ENCODE measurements at regions of chr5 and their contacts with region 1.

Region 1: GRCh38 chr5:118987988-118988865 is at the start of gene DTWD2:
- DNase-seq: peak; percentile 97
- ATAC-seq: peak; percentile 87
- H3K4me3 ChIP-seq: peak within 1 kb of the TSS; percentile 63 to 86 (median 76)
- H3K4me3 Mint-ChIP-seq: peak within 1 kb of the TSS; percentile 91
- H3K27ac ChIP-seq: peak within 1 kb of the TSS; percentile 66 to 73
- H3K27ac Mint-ChIP-seq: peak within 1 kb of the TSS; percentile 90
- H3K4me1 ChIP-seq: peaks cover 17% of the 10 kb centered on the region in 2 donors
- H3K4me1 Mint-ChIP-seq: peaks cover 32% of the 10 kb centered on the region
- H3K27me3 ChIP-seq: no peaks in the 10 kb centered on the region
- H3K27me3 Mint-ChIP-seq: no peaks in the 10 kb centered on the region
- CTCF ChIP-seq: peak; percentile 99
- total RNA-seq, gene DTWD2: 6.0 and 6.3 TPM in 2 replicates

Region 2: DNA sequence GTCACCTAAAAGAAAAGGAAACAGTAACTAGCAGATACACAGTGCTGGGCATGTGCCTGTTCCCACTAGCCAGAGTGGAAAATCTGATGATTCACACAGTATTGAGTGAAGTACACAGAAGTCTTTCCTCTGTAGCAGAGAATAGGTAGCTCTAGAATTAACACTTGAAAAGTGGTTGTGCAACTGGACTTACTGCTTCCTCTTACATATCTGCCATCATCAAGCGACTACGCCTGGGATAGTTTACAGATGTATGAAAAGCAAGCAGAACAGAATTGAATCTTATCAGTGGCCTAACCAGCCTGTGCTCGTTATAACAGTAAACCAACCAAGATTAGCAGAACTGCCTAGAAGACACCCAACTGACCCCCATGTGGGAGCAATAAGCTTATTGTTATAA is 130.5 kb before region 1 on chr5:
- CTCF ChIA-PET with region 1: no interaction called
- POLR2A ChIA-PET with region 1: no interaction called
- intact Hi-C with region 1: no loop called
- DNase-seq: no peak
- ATAC-seq: no peak
- H3K4me3 ChIP-seq: no peak overlapping the region
- H3K4me3 Mint-ChIP-seq: no peak overlapping the region
- H3K27ac ChIP-seq: no peak overlapping the region
- H3K27ac Mint-ChIP-seq: no peak overlapping the region
- H3K4me1 ChIP-seq: no peaks in the 10 kb centered on the region
- H3K4me1 Mint-ChIP-seq: no peaks in the 10 kb centered on the region
- H3K27me3 ChIP-seq: no peaks in the 10 kb centered on the region
- H3K27me3 Mint-ChIP-seq: no peaks in the 10 kb centered on the region
- CTCF ChIP-seq: no peak

Region 3: GRCh38 chr5:119070828-119071572 is 82.8 kb after region 1 on chr5 and contains the start of gene DMXL1:
- CTCF ChIA-PET with region 1: interaction called, 23 read pairs
- POLR2A ChIA-PET with region 1: interaction called, 15 read pairs
- intact Hi-C with region 1: loop called (anchors 1 kb)
- DNase-seq: peak; percentile 99
- ATAC-seq: peak; percentile 81
- H3K4me3 ChIP-seq: peak within 1 kb of the TSS; percentile 66 to 98 (median 91)
- H3K4me3 Mint-ChIP-seq: peak within 1 kb of the TSS; percentile 99
- H3K27ac ChIP-seq: peak within 1 kb of the TSS; percentile 94 to 97
- H3K27ac Mint-ChIP-seq: peak within 1 kb of the TSS; percentile 100
- H3K4me1 ChIP-seq: peaks cover 35 to 43% of the 10 kb centered on the region in 2 donors
- H3K4me1 Mint-ChIP-seq: peaks cover 40% of the 10 kb centered on the region
- H3K27me3 ChIP-seq: no peaks in the 10 kb centered on the region
- H3K27me3 Mint-ChIP-seq: no peaks in the 10 kb centered on the region
- CTCF ChIP-seq: no peak
- total RNA-seq, gene DMXL1: 129 and 135 TPM in 2 replicates

Region 4: DNA sequence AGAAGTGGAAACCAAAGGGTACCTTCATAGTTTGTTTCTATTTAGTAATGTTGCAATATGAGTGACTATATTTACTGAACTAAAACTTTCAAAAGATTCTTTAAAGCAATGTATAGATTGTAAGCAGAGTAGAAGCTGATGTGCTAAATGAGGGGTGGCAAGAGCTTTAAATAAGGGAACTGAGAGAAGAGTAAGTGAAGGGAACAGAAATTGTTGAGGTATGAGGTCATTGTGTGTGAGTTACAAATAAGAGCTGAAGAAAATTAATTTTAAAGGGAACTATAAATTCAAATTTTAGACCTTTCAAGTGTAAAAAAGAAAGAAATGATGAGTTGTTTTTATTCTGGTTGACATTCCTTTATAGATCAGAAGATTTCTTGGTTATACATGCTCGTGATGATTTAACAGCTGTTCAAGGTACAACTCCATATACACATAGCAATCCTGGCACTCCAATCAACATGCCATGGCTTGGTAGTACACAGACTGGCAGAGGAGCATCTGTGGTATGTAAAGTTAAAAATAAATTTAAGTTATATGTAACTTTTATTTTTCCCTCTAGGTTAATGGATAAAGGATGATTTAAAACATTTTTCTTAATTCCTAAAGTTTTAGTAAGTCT is 232.5 kb after region 1 on chr5:
- CTCF ChIA-PET with region 1: interaction called, 22 read pairs
- POLR2A ChIA-PET with region 1: no interaction called
- intact Hi-C with region 1: loop called (anchors 1 kb)
- DNase-seq: peak; percentile 63
- ATAC-seq: peak; percentile 92
- H3K4me3 ChIP-seq: no peak overlapping the region
- H3K4me3 Mint-ChIP-seq: peak overlapping the region; percentile 21
- H3K27ac ChIP-seq: peak overlapping the region; percentile 37 to 72
- H3K27ac Mint-ChIP-seq: peak overlapping the region; percentile 16
- H3K4me1 ChIP-seq: peaks cover 15 to 17% of the 10 kb centered on the region in 2 donors
- H3K4me1 Mint-ChIP-seq: peaks cover 21% of the 10 kb centered on the region
- H3K27me3 ChIP-seq: no peaks in the 10 kb centered on the region
- H3K27me3 Mint-ChIP-seq: no peaks in the 10 kb centered on the region
- CTCF ChIP-seq: no peak

Region 5: DNA sequence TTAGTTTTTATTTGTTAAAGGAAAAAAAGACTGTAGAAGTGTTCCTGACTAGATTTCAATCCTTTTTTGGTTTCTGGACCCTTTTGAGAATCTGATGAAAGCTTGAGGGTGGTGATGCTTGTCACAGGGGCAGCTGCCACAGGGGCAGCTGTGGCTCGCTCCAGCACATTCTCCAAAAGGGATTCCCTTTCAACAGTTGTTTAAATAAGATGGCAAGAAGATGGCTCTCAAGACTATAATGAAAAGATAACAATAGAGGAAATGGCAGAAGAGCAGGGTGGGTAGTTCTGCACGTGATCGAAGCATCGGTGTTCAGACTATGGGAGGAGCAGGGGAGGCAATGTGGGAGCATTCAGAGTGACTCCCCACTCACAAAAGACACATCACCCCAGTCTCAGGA is 321.1 kb after region 1 on chr5:
- CTCF ChIA-PET with region 1: interaction called, 13 read pairs
- POLR2A ChIA-PET with region 1: no interaction called
- intact Hi-C with region 1: no loop called
- DNase-seq: peak; percentile 48
- ATAC-seq: peak; percentile 31
- H3K4me3 ChIP-seq: peak overlapping the region in 3 of 5 experiments; percentile 1 to 46 (median 1)
- H3K4me3 Mint-ChIP-seq: peak overlapping the region; percentile 83
- H3K27ac ChIP-seq: peak overlapping the region; percentile 67 to 88
- H3K27ac Mint-ChIP-seq: peak overlapping the region; percentile 96
- H3K4me1 ChIP-seq: peaks cover 85 to 99% of the 10 kb centered on the region in 2 donors
- H3K4me1 Mint-ChIP-seq: peaks cover 89% of the 10 kb centered on the region
- H3K27me3 ChIP-seq: no peaks in the 10 kb centered on the region
- H3K27me3 Mint-ChIP-seq: no peaks in the 10 kb centered on the region
- CTCF ChIP-seq: no peak

Region 6: DNA sequence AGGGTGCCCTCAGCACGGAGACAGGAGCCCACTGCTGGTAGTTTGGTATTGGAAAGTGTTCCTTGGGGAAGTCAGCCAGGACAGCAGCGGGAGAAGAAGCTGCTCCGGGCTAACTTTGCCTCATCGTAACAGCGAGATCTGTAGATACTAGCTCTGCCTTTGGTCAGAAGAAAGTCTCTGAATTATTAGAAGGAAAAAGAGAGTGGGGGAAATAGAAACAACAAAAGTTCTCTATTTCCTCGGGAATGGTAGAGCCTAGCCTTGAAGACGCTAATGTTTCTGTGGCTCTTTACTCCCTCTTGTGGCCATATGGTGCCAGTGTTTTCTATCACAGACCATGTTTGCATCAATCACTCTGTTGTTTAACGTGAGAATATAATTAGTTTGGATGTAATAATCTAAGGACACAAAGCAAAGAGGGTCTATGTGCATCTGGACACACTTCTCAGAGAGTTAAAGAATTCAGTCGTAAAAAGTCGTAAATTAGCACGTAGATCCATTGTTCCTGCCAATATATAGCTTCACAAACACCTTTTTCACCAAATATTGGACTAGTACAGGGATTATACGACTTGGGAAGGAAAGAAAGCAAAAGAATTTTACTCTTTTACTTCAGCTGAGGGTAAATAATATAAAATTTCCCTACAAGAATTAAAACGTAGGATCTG is 423.8 kb after region 1 on chr5:
- CTCF ChIA-PET with region 1: interaction called, 86 read pairs
- POLR2A ChIA-PET with region 1: interaction called, 3 read pairs
- intact Hi-C with region 1: loop called (anchors 1 kb)
- DNase-seq: peak; percentile 85
- ATAC-seq: peak; percentile 74
- H3K4me3 ChIP-seq: peak overlapping the region; percentile 50 to 79 (median 70)
- H3K4me3 Mint-ChIP-seq: peak overlapping the region; percentile 91
- H3K27ac ChIP-seq: peak overlapping the region; percentile 55 to 67
- H3K27ac Mint-ChIP-seq: peak overlapping the region; percentile 88
- H3K4me1 ChIP-seq: peaks cover 62 to 65% of the 10 kb centered on the region in 2 donors
- H3K4me1 Mint-ChIP-seq: peaks cover 75% of the 10 kb centered on the region
- H3K27me3 ChIP-seq: no peaks in the 10 kb centered on the region
- H3K27me3 Mint-ChIP-seq: no peaks in the 10 kb centered on the region
- CTCF ChIP-seq: peak; percentile 94

Region 7: GRCh38 chr5:120463991-120464626 is 1475.9 kb after region 1 on chr5 and contains the start of gene PRR16:
- CTCF ChIA-PET with region 1: no interaction called
- POLR2A ChIA-PET with region 1: no interaction called
- intact Hi-C with region 1: loop called (anchors 10 kb)
- DNase-seq: peak; percentile 70
- ATAC-seq: peak; percentile 80
- H3K4me3 ChIP-seq: peak within 1 kb of the TSS; percentile 42 to 76 (median 57)
- H3K4me3 Mint-ChIP-seq: peak within 1 kb of the TSS; percentile 89
- H3K27ac ChIP-seq: peak within 1 kb of the TSS; percentile 5 to 20
- H3K27ac Mint-ChIP-seq: peak within 1 kb of the TSS; percentile 77
- H3K4me1 ChIP-seq: peaks cover 28% of the 10 kb centered on the region in 2 donors
- H3K4me1 Mint-ChIP-seq: peaks cover 28% of the 10 kb centered on the region
- H3K27me3 ChIP-seq: peaks cover 0 to 23% (median 20%) of the 10 kb centered on the region in 4 experiments
- H3K27me3 Mint-ChIP-seq: peaks cover 16% of the 10 kb centered on the region
- CTCF ChIP-seq: no peak
- total RNA-seq, gene PRR16: 0.27 TPM in 1 of 2 replicates, not detected in the other